Endothelial cell of umbilical vein (primary cell): ENCODE measurements at regions of chr21 and their contacts with region 1.

Region 1: GRCh38 chr21:33025489-33026442 is at the start of gene OLIG2:
- DNase-seq: peak; percentile 20
- H3K4me3 ChIP-seq: no peak within 1 kb of the TSS
- H3K27ac ChIP-seq: no peak within 1 kb of the TSS
- H3K4me1 ChIP-seq: peaks cover 3% of the 10 kb centered on the region
- H3K27me3 ChIP-seq: peaks cover 93 to 100% of the 10 kb centered on the region in 2 experiments
- CTCF ChIP-seq: no peak
- POLR2A ChIP-seq: no peak
- total RNA-seq, gene OLIG2: not detected in 2 replicates

Region 2: GRCh38 chr21:33078907-33079582 is 53.3 kb after region 1 on chr21:
- CTCF ChIA-PET with region 1: no interaction called
- POLR2A ChIA-PET with region 1: no interaction called
- dilution Hi-C with region 1: no loop called
- intact Hi-C with region 1: loop called (anchors 10 kb)
- DNase-seq: no peak
- H3K4me3 ChIP-seq: no peak overlapping the region
- H3K27ac ChIP-seq: no peak overlapping the region
- H3K4me1 ChIP-seq: no peaks in the 10 kb centered on the region
- H3K27me3 ChIP-seq: peaks cover 28 to 31% of the 10 kb centered on the region in 2 experiments
- CTCF ChIP-seq: no peak
- POLR2A ChIP-seq: no peak